Heart right ventricle (tissue), 16 donors: ENCODE measurements at regions of chr1 and their contacts with region 1.

Region 1: DNA sequence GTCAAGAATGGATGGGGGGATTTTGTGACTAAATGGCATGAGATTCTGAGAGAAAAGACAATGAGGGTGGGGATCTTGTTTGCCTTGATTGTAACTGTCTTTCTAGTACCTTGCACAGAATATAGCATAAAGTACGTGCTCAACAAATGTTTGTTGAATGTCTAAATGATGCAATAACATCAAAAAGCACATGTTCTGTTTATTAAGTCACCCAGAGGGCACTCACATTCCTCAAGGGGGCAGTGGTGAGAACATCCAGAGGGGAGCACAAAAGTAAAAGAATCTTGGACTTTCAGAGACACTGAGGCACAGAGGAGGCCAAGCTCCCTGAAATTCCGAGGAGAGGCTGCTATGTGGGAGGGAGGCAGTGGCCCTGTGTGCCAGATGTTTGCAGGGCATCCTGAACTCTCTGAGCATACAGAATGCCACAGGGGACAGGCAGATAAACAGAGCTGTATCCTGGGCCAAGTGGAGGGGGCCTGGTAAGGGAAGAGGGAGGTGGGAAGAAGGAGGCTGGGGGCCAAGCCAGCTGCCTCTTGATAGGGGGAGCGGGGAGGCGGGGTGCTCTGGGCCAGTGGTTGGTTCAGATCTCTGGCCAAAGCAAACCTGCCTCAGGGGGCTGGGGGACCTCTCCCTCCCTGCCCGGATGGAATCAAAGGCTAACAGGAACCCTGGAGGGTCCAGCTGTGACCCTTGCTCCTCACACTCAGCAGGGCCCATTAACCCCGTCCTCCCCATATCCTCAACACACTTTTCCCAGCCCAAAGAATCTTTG is 6.5 kb upstream of the ATP1A2 start:
- DNase-seq: no peak
- ATAC-seq: no peak
- H3K4me3 ChIP-seq: no peak overlapping the region
- H3K27ac ChIP-seq: no peak overlapping the region
- H3K4me1 ChIP-seq: peaks cover 3 to 38% (median 13%) of the 10 kb centered on the region in 9 donors
- H3K27me3 ChIP-seq: no peaks in the 10 kb centered on the region
- CTCF ChIP-seq: peak; percentile 26 to 62 (median 52)

Region 2: GRCh38 chr1:160144921-160145320 is 35.8 kb after region 1 on chr1:
- intact Hi-C with region 1: no loop called
- DNase-seq: no peak
- ATAC-seq: peak in 1 of 8 donors; percentile 8
- H3K4me3 ChIP-seq: no peak overlapping the region
- H3K27ac ChIP-seq: no peak overlapping the region
- H3K4me1 ChIP-seq: peaks cover 0 to 18% (median 0%) of the 10 kb centered on the region in 9 donors
- H3K27me3 ChIP-seq: no peaks in the 10 kb centered on the region
- CTCF ChIP-seq: no peak

Region 3: GRCh38 chr1:160181663-160182062 is 72.6 kb after region 1 on chr1:
- intact Hi-C with region 1: no loop called
- DNase-seq: no peak
- ATAC-seq: no peak
- H3K4me3 ChIP-seq: no peak overlapping the region
- H3K27ac ChIP-seq: no peak overlapping the region
- H3K4me1 ChIP-seq: no peaks in the 10 kb centered on the region
- H3K27me3 ChIP-seq: no peaks in the 10 kb centered on the region
- CTCF ChIP-seq: no peak

Region 4: GRCh38 chr1:160284782-160285344 is 175.8 kb after region 1 on chr1 and contains the start of gene PEX19:
- intact Hi-C with region 1: loop called in 4 of 10 experiments (anchors 2 to 10 kb)
- DNase-seq: peak; percentile 93 to 94
- ATAC-seq: peak; percentile 98 to 100 (median 100)
- H3K4me3 ChIP-seq: peak within 1 kb of the TSS; percentile 68 to 98 (median 80)
- H3K27ac ChIP-seq: peak within 1 kb of the TSS; percentile 30 to 92 (median 82)
- H3K4me1 ChIP-seq: peaks cover 9 to 28% (median 20%) of the 10 kb centered on the region in 9 donors
- H3K27me3 ChIP-seq: no peaks in the 10 kb centered on the region
- CTCF ChIP-seq: peak in 1 of 9 donors; percentile 14
- total RNA-seq, gene PEX19: 72.9 to 100 (median 94.1) TPM